GM12878 (cell line): ENCODE measurements at regions of chr3 and their contacts with region 1.

Region 1: GRCh38 chr3:25843332-25843731 is 53.4 kb downstream of the OXSM start:
- DNase-seq: no peak
- ATAC-seq: no peak
- H3K4me3 ChIP-seq: no peak overlapping the region
- H3K27ac ChIP-seq: no peak overlapping the region
- H3K4me1 ChIP-seq: no peaks in the 10 kb centered on the region
- H3K27me3 ChIP-seq: no peaks in the 10 kb centered on the region
- CTCF ChIP-seq: no peak; a peak in 1 of 6 replicates
- EP300 ChIP-seq: no peak
- POLR2A ChIP-seq: no peak
- RAD21 ChIP-seq: peak; percentile 31; the same call in 1 of the 2 replicates

Region 2: DNA sequence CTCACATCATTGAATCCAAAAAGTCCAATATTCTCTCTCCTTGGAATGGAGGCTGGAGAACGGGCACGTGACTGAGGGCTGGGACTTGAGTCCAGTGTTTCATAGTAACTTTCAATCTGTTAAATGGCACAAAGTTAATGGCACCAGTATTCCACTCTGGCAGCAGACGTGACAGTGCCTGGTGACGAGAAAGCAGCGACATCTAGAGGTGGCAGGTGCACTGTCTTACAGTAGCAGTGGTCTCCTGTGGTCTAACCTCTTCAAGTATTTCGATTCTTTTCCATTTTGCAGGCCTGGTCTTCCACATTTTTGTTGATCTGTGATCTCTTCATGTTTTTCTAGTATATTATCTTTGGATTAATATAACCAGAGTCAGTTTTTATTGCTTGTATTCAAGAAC is 53.7 kb after region 1 on chr3:
- CTCF ChIA-PET with region 1: interaction called, 5 read pairs
- POLR2A ChIA-PET with region 1: no interaction called
- RAD21 ChIA-PET with region 1: interaction called, 4 read pairs
- SMC1A ChIA-PET with region 1: no interaction called
- in situ Hi-C with region 1: no loop called
- intact Hi-C with region 1: loop called (anchors 5 kb)
- DNase-seq: no peak
- ATAC-seq: peak; percentile 98
- H3K4me3 ChIP-seq: no peak overlapping the region
- H3K27ac ChIP-seq: no peak overlapping the region
- H3K4me1 ChIP-seq: no peaks in the 10 kb centered on the region
- H3K27me3 ChIP-seq: no peaks in the 10 kb centered on the region
- CTCF ChIP-seq: peak; percentile 84 to 90 (median 89)
- EP300 ChIP-seq: no peak
- POLR2A ChIP-seq: no peak
- RAD21 ChIP-seq: peak; percentile 81

Region 3: GRCh38 chr3:26703519-26703918 is 860.2 kb after region 1 on chr3:
- CTCF ChIA-PET with region 1: no interaction called
- POLR2A ChIA-PET with region 1: no interaction called
- RAD21 ChIA-PET with region 1: no interaction called
- SMC1A ChIA-PET with region 1: no interaction called
- in situ Hi-C with region 1: no loop called
- intact Hi-C with region 1: loop called (anchors 10 kb)
- DNase-seq: no peak
- ATAC-seq: peak; percentile 53
- H3K4me3 ChIP-seq: no peak overlapping the region
- H3K27ac ChIP-seq: no peak overlapping the region
- H3K4me1 ChIP-seq: no peaks in the 10 kb centered on the region
- H3K27me3 ChIP-seq: no peaks in the 10 kb centered on the region
- CTCF ChIP-seq: no peak
- EP300 ChIP-seq: peak in 1 of 2 experiments; percentile 23; a peak in 1 of 4 replicates
- POLR2A ChIP-seq: no peak
- RAD21 ChIP-seq: no peak